ENCODE measurements at regions of chr6 and their contacts with region 1.

Region 1: GRCh38 chr6:30742316-30743098 is at the start of gene FLOT1:
- DNase-seq: peak; percentile 97 to 100
- H3K4me3 ChIP-seq: peak within 1 kb of the TSS; percentile 74
- CTCF ChIP-seq: peak in 1 of 3 donors; percentile 49
- POLR2A ChIP-seq: no peak
- total RNA-seq, gene FLOT1: 40.2 to 64.1 (median 42.5) TPM

Region 2: DNA sequence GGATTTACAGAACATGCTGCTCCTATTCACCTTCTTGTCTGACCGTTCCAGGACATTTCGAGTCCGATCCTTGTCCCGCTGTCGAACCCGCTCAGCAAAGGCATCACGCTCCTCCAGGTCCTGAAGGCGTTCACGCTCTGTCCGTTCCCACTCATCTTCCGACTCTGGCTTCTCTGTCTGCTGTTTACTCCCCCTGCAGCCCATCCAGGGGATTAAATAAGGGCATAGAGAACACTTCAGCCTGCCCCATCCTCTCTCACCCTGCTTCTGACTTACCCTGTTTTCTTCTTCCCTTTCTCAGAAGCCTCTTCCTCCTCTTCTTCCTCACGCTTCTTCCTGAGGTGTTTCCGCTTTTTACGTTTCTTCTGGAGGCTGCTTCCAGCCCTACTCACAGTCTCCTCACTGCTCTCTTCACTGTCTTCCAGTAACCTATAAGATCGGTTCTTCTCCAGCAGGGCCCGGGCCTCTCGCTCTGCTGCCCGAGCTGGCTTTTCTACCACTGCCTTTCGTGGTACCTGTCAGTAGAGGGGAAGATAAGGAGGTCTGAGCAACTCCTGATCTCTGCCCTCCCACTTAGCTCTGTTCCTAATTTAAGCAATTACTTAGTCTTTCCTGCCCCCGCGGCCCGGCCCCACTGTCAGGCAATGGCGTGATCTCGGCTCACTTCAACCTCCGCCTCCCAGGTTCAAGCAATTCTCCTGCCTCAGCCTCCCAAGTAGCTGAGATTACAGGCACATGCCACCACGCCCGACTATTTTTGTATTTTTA is 71.6 kb before region 1 on chr6:
- intact Hi-C with region 1: no loop called
- DNase-seq: no peak
- H3K4me3 ChIP-seq: no peak overlapping the region
- CTCF ChIP-seq: no peak
- POLR2A ChIP-seq: no peak

Region 3: DNA sequence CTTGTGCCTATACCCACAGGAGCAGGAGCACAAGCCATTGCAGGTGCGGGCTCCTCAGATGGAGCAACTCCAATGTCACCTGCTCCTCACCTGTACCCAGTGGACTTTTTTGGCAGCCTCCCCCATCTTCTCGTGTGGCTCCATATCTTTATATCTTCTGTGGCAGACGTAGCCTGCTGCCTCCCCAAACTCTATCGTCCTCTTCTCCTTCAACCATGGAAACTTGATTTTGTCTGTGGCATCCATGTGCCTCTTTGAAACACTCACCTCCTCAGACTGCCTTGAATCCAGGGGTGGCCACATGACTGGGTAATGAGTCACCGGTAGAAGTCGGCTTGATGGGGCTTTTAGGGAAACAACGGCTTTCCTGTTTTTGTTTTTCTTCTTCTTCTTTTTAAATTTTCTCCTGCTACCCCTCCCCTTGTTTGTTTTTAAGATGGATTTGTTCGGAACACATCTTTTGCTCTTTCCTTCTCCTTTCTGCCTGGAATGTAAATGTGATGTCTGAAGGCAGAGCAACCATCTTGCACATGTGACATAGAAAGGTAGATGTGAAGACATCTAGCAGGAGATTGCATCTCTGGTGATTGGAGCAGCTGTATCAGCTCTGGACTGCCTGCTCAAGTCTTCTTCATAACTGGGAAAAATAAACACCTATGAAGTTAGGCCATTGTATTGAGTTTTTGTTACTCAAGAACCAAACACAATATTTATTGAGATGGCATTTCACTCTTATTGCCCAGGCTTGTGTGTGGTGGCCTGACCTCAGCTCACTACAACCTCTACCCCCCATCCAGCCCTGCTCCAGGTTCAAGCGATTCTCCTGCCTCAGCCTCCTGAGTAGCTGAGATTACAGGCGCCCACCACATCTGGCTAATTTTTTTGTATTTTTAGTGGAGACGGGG is 71.9 kb after region 1 on chr6:
- intact Hi-C with region 1: loop called (anchors 10 kb)
- DNase-seq: no peak
- H3K4me3 ChIP-seq: no peak overlapping the region
- CTCF ChIP-seq: no peak
- POLR2A ChIP-seq: no peak

Region 4: GRCh38 chr6:30877419-30878371 is 135.2 kb after region 1 on chr6:
- intact Hi-C with region 1: loop called (anchors 10 kb)
- DNase-seq: peak; percentile 89 to 97
- H3K4me3 ChIP-seq: no peak overlapping the region
- CTCF ChIP-seq: peak in 1 of 3 donors; percentile 85
- POLR2A ChIP-seq: no peak